RWPE1 (cell line): ENCODE measurements at regions of chr12 and their contacts with region 1.

Region 1: GRCh38 chr12:87274594-87275245 is 754.5 kb downstream of the C12orf50 start:
- DNase-seq: peak; percentile 26
- H3K27ac ChIP-seq: no peak overlapping the region
- CTCF ChIP-seq: no peak; the same call in 1 of the 2 replicates

Region 2: DNA sequence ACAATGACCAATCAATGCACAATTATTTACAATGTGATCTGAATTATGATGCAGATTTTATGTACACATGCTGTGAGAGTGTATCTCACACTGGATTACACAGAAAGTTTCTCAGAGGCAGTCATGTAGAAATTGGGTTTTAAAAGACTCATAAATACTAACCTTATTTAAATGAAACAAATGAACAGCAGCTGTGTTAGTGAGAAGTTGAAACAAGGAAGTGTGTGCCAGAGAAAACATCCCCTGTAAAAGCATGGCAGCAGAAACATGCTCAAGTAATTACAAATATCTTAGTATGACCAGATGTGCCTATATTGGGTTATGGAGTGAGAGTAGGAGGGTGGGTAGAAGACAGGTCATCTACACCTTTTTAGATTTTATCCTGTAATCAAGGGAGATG is 30.8 kb after region 1 on chr12:
- CTCF ChIA-PET with region 1: no interaction called
- POLR2A ChIA-PET with region 1: no interaction called
- DNase-seq: no peak
- H3K27ac ChIP-seq: no peak overlapping the region
- CTCF ChIP-seq: no peak

Region 3: GRCh38 chr12:87981495-87981894 is 706.8 kb after region 1 on chr12:
- CTCF ChIA-PET with region 1: interaction called, 10 read pairs
- POLR2A ChIA-PET with region 1: no interaction called
- DNase-seq: no peak
- H3K27ac ChIP-seq: no peak overlapping the region
- CTCF ChIP-seq: no peak

Region 4: GRCh38 chr12:87995581-87996178 is 721.0 kb after region 1 on chr12:
- CTCF ChIA-PET with region 1: no interaction called
- POLR2A ChIA-PET with region 1: no interaction called
- DNase-seq: peak; percentile 49
- H3K27ac ChIP-seq: no peak overlapping the region
- CTCF ChIP-seq: peak; percentile 80